ENCODE measurements at regions of chr1 and their contacts with region 1.

Region 1: GRCh38 chr1:3618881-3619671 is 5.7 kb upstream of the TPRG1L start:
- DNase-seq: peak; percentile 39 to 76
- ATAC-seq: peak; percentile 48 to 83 (median 73)
- H3K4me3 ChIP-seq: no peak overlapping the region
- H3K27ac ChIP-seq: no peak overlapping the region
- H3K4me1 ChIP-seq: peaks cover 8 to 33% (median 24%) of the 10 kb centered on the region in 9 donors
- H3K27me3 ChIP-seq: peaks cover 0 to 8% (median 0%) of the 10 kb centered on the region in 7 donors
- CTCF ChIP-seq: peak; percentile 84 to 92 (median 89)

Region 2: DNA sequence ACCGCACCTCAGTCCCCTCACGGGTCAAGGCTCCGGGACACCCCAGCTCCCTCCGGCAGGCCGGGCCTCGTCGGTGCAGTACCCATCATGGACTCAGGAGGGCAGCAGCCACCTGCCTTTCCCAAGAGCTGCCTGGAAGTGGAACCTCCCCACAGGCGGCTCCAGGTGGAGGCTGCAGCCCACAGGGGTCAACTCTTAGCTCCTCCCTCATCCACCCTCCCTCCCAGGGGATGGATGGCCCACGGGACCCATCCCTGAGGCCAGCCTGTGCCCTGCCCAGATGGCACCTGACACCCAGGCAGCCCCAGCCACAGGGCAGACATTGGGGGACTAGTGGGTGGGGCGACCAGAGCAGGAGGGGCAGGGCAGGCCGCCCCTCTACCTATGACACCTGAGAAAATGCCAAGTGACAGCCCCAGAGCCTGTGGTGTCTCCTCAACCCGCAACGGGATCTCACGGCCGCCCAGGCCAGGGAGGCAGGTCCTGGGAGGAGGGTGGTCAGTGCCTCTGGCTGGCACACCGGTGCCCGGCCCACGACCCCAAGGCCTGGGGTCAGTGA is 165.8 kb before region 1 on chr1:
- intact Hi-C with region 1: loop called in 2 of 10 experiments (anchors 1 to 2 kb)
- DNase-seq: peak; percentile 66 to 79
- ATAC-seq: peak; percentile 68 to 90 (median 81)
- H3K4me3 ChIP-seq: no peak overlapping the region
- H3K27ac ChIP-seq: no peak overlapping the region
- H3K4me1 ChIP-seq: peaks cover 15 to 33% (median 25%) of the 10 kb centered on the region in 9 donors
- H3K27me3 ChIP-seq: peaks cover 3 to 46% (median 25%) of the 10 kb centered on the region in 7 donors
- CTCF ChIP-seq: peak; percentile 90 to 97 (median 96)

Region 3: GRCh38 chr1:3491291-3492246 is 127.5 kb before region 1 on chr1:
- intact Hi-C with region 1: loop called (anchors 1 to 2 kb)
- DNase-seq: peak; percentile 72 to 86
- ATAC-seq: peak; percentile 79 to 91 (median 83)
- H3K4me3 ChIP-seq: peak overlapping the region in 1 of 10 donors; percentile 1
- H3K27ac ChIP-seq: no peak overlapping the region
- H3K4me1 ChIP-seq: peaks cover 0 to 9% (median 6%) of the 10 kb centered on the region in 9 donors
- H3K27me3 ChIP-seq: peaks cover 0 to 7% (median 0%) of the 10 kb centered on the region in 7 donors
- CTCF ChIP-seq: peak; percentile 99 to 100 (median 100)

Region 4: GRCh38 chr1:3564921-3565827 is 53.9 kb before region 1 on chr1:
- intact Hi-C with region 1: loop called (anchors 1 to 5 kb)
- DNase-seq: no peak
- ATAC-seq: peak in 7 of 8 donors; percentile 30 to 60 (median 47)
- H3K4me3 ChIP-seq: no peak overlapping the region
- H3K27ac ChIP-seq: no peak overlapping the region
- H3K4me1 ChIP-seq: peaks cover 0 to 10% (median 0%) of the 10 kb centered on the region in 9 donors
- H3K27me3 ChIP-seq: peaks cover 0 to 18% (median 0%) of the 10 kb centered on the region in 7 donors
- CTCF ChIP-seq: peak; percentile 45 to 96 (median 89)

Region 5: DNA sequence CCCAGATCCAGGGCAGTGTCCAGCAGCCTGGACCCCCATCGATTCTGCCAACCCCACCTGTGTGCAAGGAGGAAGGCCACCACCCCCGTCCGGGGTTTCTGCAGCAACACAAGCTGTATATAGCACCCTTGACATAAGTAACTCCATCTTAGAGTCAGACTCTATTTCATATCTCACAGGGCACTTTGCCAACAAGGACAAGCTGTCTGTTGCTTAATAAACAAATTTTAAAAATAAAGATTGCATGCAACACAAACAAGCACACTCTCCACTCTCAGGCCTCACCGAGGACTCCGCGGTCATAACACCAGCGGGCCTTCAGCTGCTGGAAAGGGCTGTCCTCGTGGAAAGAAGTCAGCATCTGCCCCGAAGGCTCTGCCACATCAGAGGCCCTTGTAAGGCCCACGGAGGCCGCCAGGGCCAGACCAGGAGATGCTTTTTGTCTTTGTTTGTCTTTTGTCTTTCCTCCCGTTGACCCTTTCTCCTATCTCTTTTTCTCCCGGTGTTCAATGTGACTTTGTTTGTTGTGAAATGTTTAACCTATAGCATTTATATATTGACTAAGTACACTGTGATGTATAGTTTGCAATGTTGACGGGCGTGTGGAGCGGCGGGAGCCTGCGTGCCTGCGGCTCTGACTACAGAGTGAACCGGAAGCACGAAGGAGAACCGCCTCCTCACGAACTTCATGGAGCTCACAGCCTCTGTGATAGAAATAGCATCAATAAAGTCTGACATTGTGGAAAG is 32.0 kb before region 1 on chr1:
- intact Hi-C with region 1: no loop called
- DNase-seq: no peak
- ATAC-seq: no peak
- H3K4me3 ChIP-seq: no peak overlapping the region
- H3K27ac ChIP-seq: no peak overlapping the region
- H3K4me1 ChIP-seq: peaks cover 0 to 16% (median 5%) of the 10 kb centered on the region in 9 donors
- H3K27me3 ChIP-seq: peaks cover 0 to 10% (median 0%) of the 10 kb centered on the region in 7 donors
- CTCF ChIP-seq: no peak

Region 6: DNA sequence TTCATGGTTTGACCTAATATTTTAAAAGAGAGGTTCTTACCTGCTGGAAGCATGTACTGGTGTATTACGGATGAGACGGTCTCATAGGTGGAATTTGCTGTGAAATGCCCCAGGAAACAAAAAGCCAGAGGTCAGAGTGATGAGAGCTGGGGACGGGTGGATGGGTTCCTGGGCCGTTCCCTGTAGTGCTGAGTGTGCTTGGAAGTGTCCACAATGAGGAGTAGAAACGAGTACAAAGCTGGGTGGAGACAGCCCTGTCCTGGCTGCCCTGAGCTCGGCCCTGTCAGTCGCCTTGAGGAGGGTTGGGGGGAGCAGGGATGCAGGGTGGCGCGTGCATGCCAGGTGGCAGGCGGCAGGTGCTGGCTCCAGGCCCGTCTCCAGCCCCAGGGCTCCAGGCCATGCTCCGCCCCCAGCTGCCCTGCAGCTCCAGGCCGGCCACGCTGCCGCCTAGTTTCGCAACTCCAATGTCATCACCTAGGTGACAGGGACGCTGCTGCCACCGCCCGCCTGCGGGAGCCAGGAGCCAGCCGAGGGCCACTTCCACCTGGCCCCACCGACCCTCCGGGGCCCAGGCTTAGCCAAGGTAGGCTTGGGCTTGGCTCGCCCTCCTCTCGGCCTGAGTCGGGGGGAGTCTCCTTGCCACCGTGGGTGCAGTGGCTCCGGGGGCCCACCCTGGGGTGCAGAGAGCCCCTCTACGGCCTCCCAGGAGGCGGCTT is 49.7 kb after region 1 on chr1:
- intact Hi-C with region 1: no loop called
- DNase-seq: peak; percentile 73 to 81
- ATAC-seq: peak; percentile 84 to 95 (median 92)
- H3K4me3 ChIP-seq: peak overlapping the region in 5 of 10 donors; percentile 3 to 32 (median 26)
- H3K27ac ChIP-seq: peak overlapping the region in 3 of 10 donors; percentile 26 to 52 (median 51)
- H3K4me1 ChIP-seq: peaks cover 0 to 17% (median 12%) of the 10 kb centered on the region in 9 donors
- H3K27me3 ChIP-seq: peaks cover 0 to 24% (median 3%) of the 10 kb centered on the region in 7 donors
- CTCF ChIP-seq: no peak

Region 7: GRCh38 chr1:3827813-3828307 is 208.8 kb after region 1 on chr1:
- intact Hi-C with region 1: no loop called
- DNase-seq: no peak
- ATAC-seq: peak in 1 of 8 donors; percentile 53
- H3K4me3 ChIP-seq: no peak overlapping the region
- H3K27ac ChIP-seq: no peak overlapping the region
- H3K4me1 ChIP-seq: no peaks in the 10 kb centered on the region
- H3K27me3 ChIP-seq: no peaks in the 10 kb centered on the region
- CTCF ChIP-seq: no peak

Measured in heart right ventricle (tissue), 16 donors.